ENCODE measurements at regions of chr1 and their contacts with region 1.

Region 1: DNA sequence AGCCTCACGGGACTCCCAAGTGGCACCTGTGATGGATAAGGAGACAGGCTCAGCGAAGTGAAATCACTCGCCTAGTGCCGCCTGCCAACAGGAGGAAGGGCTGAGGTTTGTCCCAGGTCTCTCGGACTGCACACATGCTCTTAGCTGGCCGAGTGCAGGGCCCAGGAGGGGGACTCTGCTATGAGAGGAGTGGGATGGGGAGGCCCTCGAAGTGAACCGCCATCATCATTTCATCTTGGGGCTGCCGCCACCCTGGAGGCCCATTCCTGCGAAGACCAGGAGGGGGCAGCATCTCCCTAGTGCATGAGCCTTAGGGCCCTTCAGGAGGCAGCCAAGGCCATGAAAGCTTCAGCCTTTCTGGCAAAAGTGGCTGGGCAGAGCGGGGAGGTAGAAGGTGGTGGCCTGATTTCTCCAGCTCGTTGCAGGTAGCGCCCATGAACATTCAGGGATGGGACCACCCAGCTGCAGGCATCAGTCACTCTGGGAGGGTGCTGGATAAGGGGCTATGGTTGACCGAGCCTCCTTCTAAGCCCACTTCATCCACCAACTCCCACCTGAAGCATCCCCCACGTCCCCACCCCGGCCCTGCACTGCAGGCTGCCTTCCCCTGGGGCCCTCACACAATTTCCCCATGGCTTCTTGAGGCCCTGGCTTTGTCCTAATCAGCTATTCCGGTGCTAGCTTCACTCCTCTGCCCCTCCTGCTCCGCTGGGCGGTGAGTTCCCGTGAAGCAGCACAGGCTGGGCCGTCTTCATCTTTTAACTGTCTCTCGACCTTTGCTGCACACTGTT is 17.2 kb upstream of the RASSF5 start:
- DNase-seq: peak; percentile 84
- H3K4me3 Mint-ChIP-seq: no peak overlapping the region
- H3K27ac Mint-ChIP-seq: no peak overlapping the region
- H3K4me1 Mint-ChIP-seq: no peaks in the 10 kb centered on the region
- H3K27me3 Mint-ChIP-seq: no peaks in the 10 kb centered on the region

Region 2: GRCh38 chr1:206461602-206462455 is 28.3 kb before region 1 on chr1:
- CTCF ChIA-PET with region 1: interaction called, 10 read pairs
- POLR2A ChIA-PET with region 1: no interaction called
- intact Hi-C with region 1: no loop called
- DNase-seq: peak; percentile 81
- H3K4me3 Mint-ChIP-seq: no peak overlapping the region
- H3K27ac Mint-ChIP-seq: no peak overlapping the region
- H3K4me1 Mint-ChIP-seq: peaks cover 52% of the 10 kb centered on the region
- H3K27me3 Mint-ChIP-seq: no peaks in the 10 kb centered on the region

Region 3: GRCh38 chr1:206479183-206480125 is 10.7 kb before region 1 on chr1:
- CTCF ChIA-PET with region 1: interaction called, 63 read pairs
- POLR2A ChIA-PET with region 1: interaction called, 3 read pairs
- intact Hi-C with region 1: no loop called
- DNase-seq: peak; percentile 79
- H3K4me3 Mint-ChIP-seq: no peak overlapping the region
- H3K27ac Mint-ChIP-seq: peak overlapping the region; percentile 26
- H3K4me1 Mint-ChIP-seq: peaks cover 37% of the 10 kb centered on the region
- H3K27me3 Mint-ChIP-seq: no peaks in the 10 kb centered on the region

Region 4: DNA sequence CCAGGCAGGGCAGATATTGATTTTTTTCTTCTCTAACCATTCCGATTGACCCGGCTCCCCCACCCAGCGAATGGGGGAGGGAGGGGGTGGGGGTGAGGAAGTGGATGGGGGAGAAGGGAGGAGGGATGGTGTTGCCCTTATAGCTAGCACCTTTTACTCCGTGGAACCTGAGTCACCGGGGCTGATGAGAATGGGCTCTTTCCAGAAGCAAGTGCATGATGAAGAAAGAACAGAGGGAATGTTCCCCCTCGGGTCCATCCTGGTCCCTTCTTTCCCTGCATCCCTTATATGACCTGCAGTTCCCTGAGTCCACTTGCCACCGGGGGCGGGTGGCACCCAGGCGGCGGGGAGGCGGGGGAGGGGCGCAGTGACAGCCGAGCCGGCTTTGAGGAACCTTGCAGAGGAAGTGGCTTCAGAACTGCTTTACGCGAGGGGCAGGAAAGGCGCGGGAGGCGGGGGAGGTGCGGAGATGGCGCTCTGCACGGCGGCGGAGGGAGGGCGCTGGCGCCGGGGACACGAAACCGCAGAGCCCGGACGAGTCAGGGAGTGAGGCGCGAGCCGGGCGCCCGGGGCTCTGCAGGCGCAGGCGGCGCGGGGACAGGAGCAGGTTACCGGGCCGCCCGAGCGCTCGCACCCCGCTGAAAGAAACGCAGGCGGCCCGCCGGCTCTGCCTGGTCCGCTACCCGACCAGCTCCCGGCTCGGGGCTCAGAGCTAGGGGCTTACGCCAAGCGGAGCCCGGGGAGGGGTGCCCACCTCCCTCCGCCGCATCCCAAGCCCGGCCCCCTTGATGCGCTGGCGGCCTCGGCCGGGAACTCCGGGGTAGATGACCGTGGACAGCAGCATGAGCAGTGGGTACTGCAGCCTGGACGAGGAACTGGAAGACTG is 66.8 kb after region 1 on chr1:
- CTCF ChIA-PET with region 1: interaction called, 19 read pairs
- POLR2A ChIA-PET with region 1: no interaction called
- intact Hi-C with region 1: no loop called
- DNase-seq: peak; percentile 94
- H3K4me3 Mint-ChIP-seq: peak overlapping the region; percentile 97
- H3K27ac Mint-ChIP-seq: peak overlapping the region; percentile 99
- H3K4me1 Mint-ChIP-seq: peaks cover 66% of the 10 kb centered on the region
- H3K27me3 Mint-ChIP-seq: no peaks in the 10 kb centered on the region

Region 5: GRCh38 chr1:206658264-206658980 is 168.2 kb after region 1 on chr1:
- CTCF ChIA-PET with region 1: interaction called, 96 read pairs
- POLR2A ChIA-PET with region 1: interaction called, 3 read pairs
- intact Hi-C with region 1: no loop called
- DNase-seq: peak; percentile 74
- H3K4me3 Mint-ChIP-seq: no peak overlapping the region
- H3K27ac Mint-ChIP-seq: no peak overlapping the region
- H3K4me1 Mint-ChIP-seq: peaks cover 20% of the 10 kb centered on the region
- H3K27me3 Mint-ChIP-seq: peaks cover 18% of the 10 kb centered on the region

Measured in activated CD4-positive, alpha-beta memory T cell treated with anti-CD3 and anti-CD28 coated beads for 36 hours (primary cell).